ENCODE measurements at regions of chr12 and their contacts with region 1.

Region 1: DNA sequence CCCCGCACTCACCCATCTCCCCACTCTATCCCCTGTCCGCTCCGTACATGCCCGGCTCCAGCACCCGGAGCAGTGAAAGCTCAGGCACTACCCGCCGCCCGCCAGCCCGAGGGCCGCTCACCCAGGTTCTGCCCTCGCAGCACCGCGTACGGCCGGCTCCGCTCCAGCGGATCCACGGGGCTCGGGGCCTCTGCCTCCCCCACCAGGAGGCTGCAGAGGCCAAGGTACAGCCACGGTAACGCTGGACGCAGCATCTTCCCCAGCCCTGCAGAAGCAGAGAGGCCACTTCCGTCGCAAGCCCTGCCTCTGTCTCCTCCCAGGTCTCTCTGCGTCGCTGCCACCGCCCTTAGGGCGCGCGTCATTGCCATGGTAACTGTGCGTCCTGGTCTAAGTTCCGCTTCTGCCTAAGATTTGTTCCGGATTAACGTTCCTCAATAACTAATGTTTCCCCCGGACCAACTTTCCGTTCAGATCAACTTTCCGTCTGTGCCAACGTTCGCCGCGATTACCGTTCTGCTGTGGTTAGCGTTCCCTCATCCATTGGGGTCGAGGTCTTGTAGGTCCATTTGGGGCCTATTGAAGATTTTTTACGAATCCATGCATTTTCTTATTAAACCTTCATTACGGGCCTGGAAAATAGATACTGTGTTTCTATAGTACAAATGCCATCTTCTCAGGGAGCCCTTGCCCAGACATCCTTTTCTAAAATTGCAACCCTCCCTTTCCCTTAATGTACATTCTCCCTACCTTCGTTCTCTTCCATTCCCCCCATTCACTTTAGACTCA is at the start of gene C12orf76:
- DNase-seq: peak; percentile 93
- H3K4me3 Mint-ChIP-seq: peak within 1 kb of the TSS; percentile 82
- H3K27ac Mint-ChIP-seq: peak within 1 kb of the TSS; percentile 89
- H3K4me1 Mint-ChIP-seq: peaks cover 43% of the 10 kb centered on the region
- H3K27me3 Mint-ChIP-seq: no peaks in the 10 kb centered on the region
- total RNA-seq, gene C12orf76: 26.2 to 29.1 TPM

Region 2: GRCh38 chr12:110023059-110023606 is 25.3 kb before region 1 on chr12:
- CTCF ChIA-PET with region 1: no interaction called
- POLR2A ChIA-PET with region 1: no interaction called
- DNase-seq: no peak
- H3K4me3 Mint-ChIP-seq: no peak overlapping the region
- H3K27ac Mint-ChIP-seq: no peak overlapping the region
- H3K4me1 Mint-ChIP-seq: peaks cover 29% of the 10 kb centered on the region
- H3K27me3 Mint-ChIP-seq: no peaks in the 10 kb centered on the region

Region 3: GRCh38 chr12:110073049-110073831 is 24.8 kb after region 1 on chr12:
- CTCF ChIA-PET with region 1: no interaction called
- POLR2A ChIA-PET with region 1: interaction called, 10 read pairs
- DNase-seq: peak; percentile 55
- H3K4me3 Mint-ChIP-seq: peak overlapping the region; percentile 86
- H3K27ac Mint-ChIP-seq: peak overlapping the region; percentile 85
- H3K4me1 Mint-ChIP-seq: peaks cover 55% of the 10 kb centered on the region
- H3K27me3 Mint-ChIP-seq: no peaks in the 10 kb centered on the region

Region 4: DNA sequence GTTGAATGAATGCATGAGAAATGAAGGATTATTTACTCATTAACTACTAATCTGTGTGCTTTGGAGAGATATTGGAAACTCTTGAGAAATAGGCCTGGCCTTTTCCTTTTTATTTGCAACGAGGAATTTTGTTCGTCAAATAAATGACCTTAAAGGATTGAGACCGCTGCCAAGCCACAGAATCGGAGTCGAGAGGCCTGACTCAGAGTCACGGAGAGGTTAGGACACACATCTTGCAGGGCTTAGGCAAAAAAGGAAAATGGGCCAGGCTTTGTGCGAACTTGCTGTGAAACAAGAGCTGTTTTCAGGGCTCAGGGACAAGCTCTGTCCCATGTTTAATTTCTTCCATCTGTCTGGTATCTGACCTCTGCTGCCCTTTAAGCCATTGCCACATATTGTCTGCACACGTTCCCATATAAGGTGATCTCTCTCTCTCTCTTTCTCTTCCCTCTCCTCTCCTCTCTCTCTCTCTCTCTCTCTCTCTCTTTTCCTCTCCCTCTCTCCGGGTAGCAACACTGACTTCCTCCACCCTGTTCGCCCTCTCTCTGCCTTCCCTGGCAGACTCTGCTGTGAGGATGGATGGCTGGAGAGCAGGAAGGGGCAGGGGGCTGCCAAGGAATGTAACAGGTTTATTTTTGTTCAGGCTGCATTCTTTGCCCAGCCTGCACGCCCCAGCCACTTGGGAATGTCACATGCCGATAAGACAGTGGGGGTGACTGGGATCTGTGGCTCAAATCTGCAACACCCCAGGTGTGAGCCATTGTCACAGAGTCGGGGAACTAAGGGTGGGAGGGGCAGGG is 60.8 kb after region 1 on chr12:
- CTCF ChIA-PET with region 1: no interaction called
- POLR2A ChIA-PET with region 1: no interaction called
- DNase-seq: no peak
- H3K4me3 Mint-ChIP-seq: no peak overlapping the region
- H3K27ac Mint-ChIP-seq: no peak overlapping the region
- H3K4me1 Mint-ChIP-seq: no peaks in the 10 kb centered on the region
- H3K27me3 Mint-ChIP-seq: peaks cover 8% of the 10 kb centered on the region

Region 5: DNA sequence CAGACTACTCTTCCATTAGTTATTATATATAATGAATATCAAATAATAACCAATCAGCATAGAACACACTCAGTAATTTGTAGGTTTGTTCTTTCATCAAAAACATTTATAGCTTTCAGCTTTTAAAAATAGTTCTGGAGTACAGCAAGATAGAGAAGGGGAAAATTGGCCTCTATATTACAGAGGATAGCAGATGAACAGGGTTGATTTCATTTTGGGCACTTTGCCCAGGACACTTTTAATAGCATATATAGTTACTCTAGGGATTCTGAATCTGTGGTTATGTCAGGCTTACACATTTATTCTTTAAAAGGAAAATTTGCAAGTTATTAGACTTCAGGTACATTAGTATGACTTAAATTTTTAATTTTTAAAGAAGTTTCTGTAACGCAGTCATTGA is 128.3 kb after region 1 on chr12:
- CTCF ChIA-PET with region 1: no interaction called
- POLR2A ChIA-PET with region 1: no interaction called
- DNase-seq: no peak
- H3K4me3 Mint-ChIP-seq: no peak overlapping the region
- H3K27ac Mint-ChIP-seq: no peak overlapping the region
- H3K4me1 Mint-ChIP-seq: no peaks in the 10 kb centered on the region
- H3K27me3 Mint-ChIP-seq: no peaks in the 10 kb centered on the region